ENCODE measurements at regions of chr16 and their contacts with region 1.

Region 1: DNA sequence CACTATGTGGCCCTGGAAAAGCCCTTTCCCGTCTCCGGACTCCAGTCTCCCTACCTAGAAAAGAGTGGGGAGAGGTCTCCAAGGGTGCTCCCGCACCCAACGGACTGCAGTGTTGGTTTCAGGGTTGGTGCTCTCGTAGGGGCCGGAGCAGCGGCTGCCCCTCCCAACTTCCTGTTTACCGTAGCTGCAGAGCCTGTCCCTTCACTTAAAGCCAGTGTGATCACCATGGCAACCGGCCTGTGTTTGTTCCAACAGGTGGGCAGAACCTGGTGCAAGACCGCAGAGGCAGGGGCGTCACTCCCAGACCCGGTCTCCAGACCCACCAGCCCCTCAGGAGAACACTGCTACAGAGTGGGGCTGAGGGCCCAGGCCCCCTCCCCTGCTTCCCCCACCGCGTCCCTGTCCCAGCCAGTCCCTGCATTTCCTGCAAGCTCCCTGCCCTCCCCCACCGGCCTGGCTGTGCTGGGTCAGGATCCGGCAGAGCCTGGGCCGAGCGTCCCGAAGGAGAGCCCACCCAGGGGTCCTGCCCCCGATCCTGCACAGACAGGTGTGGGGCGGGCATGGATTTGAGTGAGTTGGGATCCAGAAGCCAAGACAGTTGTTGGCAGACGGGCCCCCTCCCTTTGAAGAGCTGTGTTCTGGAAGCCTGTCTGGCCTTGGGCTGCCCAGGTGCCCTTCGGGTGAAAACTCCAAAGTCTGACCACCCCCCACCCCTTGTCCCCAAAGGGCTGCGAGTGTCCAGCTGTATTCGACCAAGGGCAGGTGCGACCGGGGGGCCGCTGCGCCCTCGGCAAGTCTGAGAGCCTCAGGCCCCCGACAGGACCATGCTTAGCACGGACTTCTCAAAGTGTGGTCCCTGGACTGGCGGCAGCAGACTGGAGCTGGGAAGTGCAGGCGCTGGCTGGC is 1.5 kb upstream of the BAIAP3 start:
- DNase-seq: peak; percentile 92
- ATAC-seq: peak; percentile 72
- H3K4me3 ChIP-seq: peak overlapping the region; percentile 38 to 79 (median 61)
- H3K27ac ChIP-seq: peak overlapping the region; percentile 82
- H3K4me1 ChIP-seq: peaks cover 31% of the 10 kb centered on the region
- H3K27me3 ChIP-seq: peaks cover 15 to 46% of the 10 kb centered on the region in 2 experiments
- CTCF ChIP-seq: no peak
- EP300 ChIP-seq: peak in 1 of 2 experiments; percentile 6; a peak in 1 of 4 replicates
- POLR2A ChIP-seq: peak; percentile 63 to 71
- RAD21 ChIP-seq: no peak

Region 2: DNA sequence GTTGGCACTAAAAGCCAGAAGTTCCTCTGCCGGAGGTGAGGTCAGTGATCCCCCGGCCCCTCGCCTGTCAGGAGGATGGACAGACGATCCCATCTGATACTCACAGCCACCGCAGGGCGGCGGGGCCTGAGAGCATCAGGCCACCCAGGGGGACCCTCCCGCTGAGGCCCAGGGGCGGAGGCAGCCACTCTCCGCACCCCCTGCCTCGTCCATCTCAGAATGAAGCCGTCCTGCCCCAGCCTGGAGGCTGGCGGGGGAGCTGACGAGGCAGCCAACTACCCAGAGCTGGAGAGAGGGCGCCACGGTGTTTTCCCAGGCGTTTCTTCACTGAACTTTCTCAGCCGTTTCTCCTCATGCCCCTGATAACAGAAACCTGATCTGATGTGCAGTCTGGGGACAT is 53.5 kb before region 1 on chr16:
- CTCF ChIA-PET with region 1: no interaction called
- POLR2A ChIA-PET with region 1: no interaction called
- in situ Hi-C with region 1: no loop called
- intact Hi-C with region 1: no loop called
- DNase-seq: no peak
- ATAC-seq: peak; percentile 18
- H3K4me3 ChIP-seq: no peak overlapping the region
- H3K27ac ChIP-seq: no peak overlapping the region
- H3K4me1 ChIP-seq: no peaks in the 10 kb centered on the region
- H3K27me3 ChIP-seq: peaks cover 32 to 81% of the 10 kb centered on the region in 2 experiments
- CTCF ChIP-seq: peak; percentile 14; the same call in 1 of the 2 replicates
- EP300 ChIP-seq: no peak
- POLR2A ChIP-seq: no peak
- RAD21 ChIP-seq: no peak

Region 3: GRCh38 chr16:1342526-1343427 is 10.8 kb after region 1 on chr16:
- CTCF ChIA-PET with region 1: no interaction called
- POLR2A ChIA-PET with region 1: interaction called, 25 read pairs
- in situ Hi-C with region 1: no loop called
- intact Hi-C with region 1: no loop called
- DNase-seq: peak; percentile 96
- ATAC-seq: peak; percentile 93
- H3K4me3 ChIP-seq: peak overlapping the region; percentile 60 to 87 (median 71)
- H3K27ac ChIP-seq: no peak overlapping the region
- H3K4me1 ChIP-seq: peaks cover 19% of the 10 kb centered on the region
- H3K27me3 ChIP-seq: peaks cover 4 to 29% of the 10 kb centered on the region in 2 experiments; a peak in 3 of 5 replicates
- CTCF ChIP-seq: 0 out of 2 replicates have a peak, but pooled peaks have one; percentile 10
- EP300 ChIP-seq: no peak
- POLR2A ChIP-seq: no peak
- RAD21 ChIP-seq: no peak

Region 4: GRCh38 chr16:1413684-1414531 is 81.9 kb after region 1 on chr16:
- CTCF ChIA-PET with region 1: no interaction called
- POLR2A ChIA-PET with region 1: no interaction called
- in situ Hi-C with region 1: no loop called
- intact Hi-C with region 1: loop called (anchors 2 kb)
- DNase-seq: no peak
- ATAC-seq: peak; percentile 59
- H3K4me3 ChIP-seq: peak overlapping the region; percentile 79 to 98 (median 96)
- H3K27ac ChIP-seq: peak overlapping the region; percentile 63
- H3K4me1 ChIP-seq: peaks cover 29% of the 10 kb centered on the region
- H3K27me3 ChIP-seq: no peaks in the 10 kb centered on the region
- CTCF ChIP-seq: peak; percentile 87
- EP300 ChIP-seq: no peak
- POLR2A ChIP-seq: no peak
- RAD21 ChIP-seq: peak; percentile 64